Activated CD4-positive, alpha-beta memory T cell treated with anti-CD3 and anti-CD28 coated beads for 36 hours (primary cell): ENCODE measurements at regions of chr10 and their contacts with region 1.

Region 1: DNA sequence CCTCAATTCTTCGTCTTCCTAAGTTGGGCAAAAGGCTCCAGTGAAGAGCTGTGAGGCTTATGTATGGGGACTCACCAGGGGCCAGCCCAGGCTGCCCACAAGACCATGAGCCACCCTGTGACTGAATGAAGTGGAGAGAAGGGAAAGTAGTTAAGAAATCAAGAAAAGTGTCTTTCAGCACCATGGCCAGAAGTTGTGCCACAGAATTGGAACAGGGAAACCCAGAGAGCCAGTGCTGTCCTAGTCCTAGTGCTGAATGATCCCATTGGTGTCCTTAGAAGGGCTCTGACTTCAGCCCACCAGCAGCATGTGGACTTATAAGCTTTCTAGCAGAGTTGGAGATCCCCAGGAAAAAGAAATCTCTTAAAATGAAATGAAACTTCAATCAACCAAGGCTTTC is 37.0 kb upstream of the CCSER2 start:
- DNase-seq: no peak
- H3K4me3 Mint-ChIP-seq: no peak overlapping the region
- H3K27ac Mint-ChIP-seq: no peak overlapping the region
- H3K4me1 Mint-ChIP-seq: peaks cover 20% of the 10 kb centered on the region
- H3K27me3 Mint-ChIP-seq: no peaks in the 10 kb centered on the region

Region 2: DNA sequence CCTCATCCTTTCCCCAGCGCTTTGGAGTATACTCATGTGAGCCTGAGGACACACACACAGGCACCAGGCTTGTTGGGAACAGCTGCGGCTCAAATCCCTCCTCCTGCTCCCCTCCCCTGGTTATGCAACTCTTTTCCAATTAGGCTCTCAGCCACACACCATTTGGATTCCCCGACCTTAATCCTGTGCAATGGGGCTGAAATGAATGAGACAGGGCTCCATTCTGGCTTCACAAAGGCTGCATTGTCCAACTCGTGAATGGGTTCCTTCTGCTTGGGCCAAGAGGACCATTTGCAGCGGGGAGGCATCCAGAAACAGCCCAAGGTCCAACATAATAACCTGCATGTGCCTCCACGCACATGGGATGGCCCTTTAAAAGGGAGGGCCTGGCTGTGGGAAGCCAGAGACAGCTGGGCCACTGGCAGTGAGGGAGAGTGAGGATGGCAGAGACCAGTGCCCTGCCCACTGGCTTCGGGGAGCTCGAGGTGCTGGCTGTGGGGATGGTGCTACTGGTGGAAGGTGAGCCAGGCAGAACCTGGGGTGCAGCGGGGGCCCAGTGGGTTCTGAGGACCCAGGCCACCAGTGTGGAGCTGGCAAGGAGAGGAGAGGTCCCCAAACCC is 46.6 kb before region 1 on chr10 and contains the start of gene RGR:
- CTCF ChIA-PET with region 1: no interaction called
- POLR2A ChIA-PET with region 1: no interaction called
- intact Hi-C with region 1: no loop called
- DNase-seq: no peak
- H3K4me3 Mint-ChIP-seq: no peak within 1 kb of the TSS
- H3K27ac Mint-ChIP-seq: no peak within 1 kb of the TSS
- H3K4me1 Mint-ChIP-seq: no peaks in the 10 kb centered on the region
- H3K27me3 Mint-ChIP-seq: peaks cover 2% of the 10 kb centered on the region
- total RNA-seq, gene RGR: not detected

Region 3: GRCh38 chr10:84333864-84334451 is 42.6 kb after region 1 on chr10:
- CTCF ChIA-PET with region 1: no interaction called
- POLR2A ChIA-PET with region 1: interaction called, 4 read pairs
- intact Hi-C with region 1: loop called (anchors 1 kb)
- DNase-seq: peak; percentile 82
- H3K4me3 Mint-ChIP-seq: peak overlapping the region; percentile 36
- H3K27ac Mint-ChIP-seq: peak overlapping the region; percentile 78
- H3K4me1 Mint-ChIP-seq: peaks cover 40% of the 10 kb centered on the region
- H3K27me3 Mint-ChIP-seq: no peaks in the 10 kb centered on the region